OCI-LY7 (cell line): ENCODE measurements at regions of chr5 and their contacts with region 1.

Region 1: GRCh38 chr5:143592648-143593047 is 189.2 kb upstream of the NR3C1 start:
- DNase-seq: peak; percentile 93
- H3K4me3 ChIP-seq: peak overlapping the region; percentile 52
- H3K27ac ChIP-seq: peak overlapping the region; percentile 93
- H3K4me1 ChIP-seq: peaks cover 73% of the 10 kb centered on the region
- CTCF ChIP-seq: no peak

Region 2: GRCh38 chr5:142769741-142770631 is 822.7 kb before region 1 on chr5 and contains the start of gene ARHGAP26:
- CTCF ChIA-PET with region 1: no interaction called
- POLR2A ChIA-PET with region 1: no interaction called
- intact Hi-C with region 1: loop called (anchors 2 kb)
- DNase-seq: peak; percentile 96
- H3K4me3 ChIP-seq: peak within 1 kb of the TSS; percentile 76
- H3K27ac ChIP-seq: peak within 1 kb of the TSS; percentile 35
- H3K4me1 ChIP-seq: peaks cover 15% of the 10 kb centered on the region
- CTCF ChIP-seq: no peak
- total RNA-seq, gene ARHGAP26: 7.0 and 7.5 TPM in 2 replicates

Region 3: DNA sequence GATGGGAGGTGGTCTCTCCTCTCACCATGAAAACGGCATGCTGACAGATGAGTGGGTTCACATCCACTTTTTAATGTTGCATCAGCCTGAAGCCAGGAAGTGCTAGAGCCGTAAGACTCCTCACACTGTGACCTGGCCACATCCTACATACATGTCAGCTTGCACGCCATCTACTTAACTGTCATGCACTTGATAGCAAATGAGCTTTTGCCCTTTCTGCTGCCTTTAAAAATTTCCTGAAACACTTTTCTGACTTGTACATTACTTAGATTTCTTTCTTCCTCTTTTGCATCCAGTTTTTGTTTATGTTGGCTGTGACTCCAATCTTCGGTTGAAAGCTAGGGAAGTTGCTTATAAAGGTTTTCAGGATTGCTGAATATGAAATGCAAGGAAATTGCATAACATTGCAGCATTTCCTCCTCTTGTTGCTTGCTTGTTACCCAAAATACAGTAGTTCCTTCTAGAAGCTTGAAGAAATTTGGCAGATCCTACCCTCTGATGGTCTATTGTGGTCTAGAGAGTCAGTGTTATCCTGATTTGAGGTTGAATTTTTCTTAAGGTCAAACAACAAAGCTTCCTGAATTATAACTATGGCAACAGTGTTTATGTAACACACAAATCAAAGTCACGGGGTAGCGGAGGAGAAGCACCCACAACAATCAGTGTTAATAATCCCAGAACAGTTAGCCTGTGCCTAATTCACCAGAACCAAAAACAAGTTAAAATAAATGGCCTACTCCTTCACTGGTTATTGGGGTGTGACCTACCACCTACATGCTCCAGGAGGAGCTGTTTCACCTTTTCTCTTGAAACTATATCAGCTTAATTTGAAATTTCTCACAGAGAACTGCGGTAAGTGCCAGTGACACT is 590.0 kb before region 1 on chr5:
- CTCF ChIA-PET with region 1: no interaction called
- POLR2A ChIA-PET with region 1: interaction called, 3 read pairs
- intact Hi-C with region 1: loop called (anchors 5 kb)
- DNase-seq: peak; percentile 91
- H3K4me3 ChIP-seq: no peak overlapping the region
- H3K27ac ChIP-seq: peak overlapping the region; percentile 60
- H3K4me1 ChIP-seq: peaks cover 47% of the 10 kb centered on the region
- CTCF ChIP-seq: peak; percentile 75

Region 4: GRCh38 chr5:143576711-143577484 is 15.8 kb before region 1 on chr5:
- CTCF ChIA-PET with region 1: no interaction called
- POLR2A ChIA-PET with region 1: interaction called, 53 read pairs
- intact Hi-C with region 1: no loop called
- DNase-seq: no peak
- H3K4me3 ChIP-seq: no peak overlapping the region
- H3K27ac ChIP-seq: no peak overlapping the region
- H3K4me1 ChIP-seq: peaks cover 25% of the 10 kb centered on the region
- CTCF ChIP-seq: no peak

Region 5: GRCh38 chr5:143605403-143606005 is 12.9 kb after region 1 on chr5:
- CTCF ChIA-PET with region 1: interaction called, 4 read pairs
- POLR2A ChIA-PET with region 1: interaction called, 34 read pairs
- intact Hi-C with region 1: no loop called
- DNase-seq: peak; percentile 85
- H3K4me3 ChIP-seq: peak overlapping the region; percentile 44
- H3K27ac ChIP-seq: peak overlapping the region; percentile 52
- H3K4me1 ChIP-seq: peaks cover 23% of the 10 kb centered on the region
- CTCF ChIP-seq: no peak

Region 6: GRCh38 chr5:143824851-143825720 is 232.4 kb after region 1 on chr5:
- CTCF ChIA-PET with region 1: no interaction called
- POLR2A ChIA-PET with region 1: no interaction called
- intact Hi-C with region 1: loop called (anchors 10 kb)
- DNase-seq: peak; percentile 86
- H3K4me3 ChIP-seq: no peak overlapping the region
- H3K27ac ChIP-seq: no peak overlapping the region
- H3K4me1 ChIP-seq: peaks cover 8% of the 10 kb centered on the region
- CTCF ChIP-seq: peak; percentile 97